Stomach (tissue), 19 donors: ENCODE measurements at regions of chr10 and their contacts with region 1.

Region 1: DNA sequence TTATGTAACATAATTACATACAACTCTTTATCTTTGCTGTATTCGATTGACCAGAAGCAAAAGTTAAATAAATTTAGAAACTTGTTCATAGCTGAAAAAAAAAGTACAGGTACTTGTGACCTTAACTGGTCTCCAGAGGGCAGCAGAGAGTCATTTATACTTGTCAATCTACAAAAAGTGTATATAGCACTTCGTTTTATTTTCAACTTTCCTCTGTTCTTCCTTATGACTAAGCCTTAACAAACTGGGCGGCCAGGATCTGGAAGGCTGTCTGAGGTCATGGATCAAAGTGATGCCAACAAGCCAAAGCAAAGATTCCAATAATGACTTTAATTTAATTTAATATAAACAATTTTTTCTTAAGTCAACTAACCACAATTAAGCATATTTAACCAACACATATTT is 29.8 kb downstream of the C10orf67 start:
- DNase-seq: peak; percentile 52 to 90
- H3K4me3 ChIP-seq: no peak overlapping the region
- H3K27ac ChIP-seq: no peak overlapping the region
- H3K4me1 ChIP-seq: peaks cover 0 to 4% (median 0%) of the 10 kb centered on the region in 4 donors
- H3K27me3 ChIP-seq: no peaks in the 10 kb centered on the region
- CTCF ChIP-seq: peak in 5 of 7 experiments; percentile 37 to 66 (median 58)
- EP300 ChIP-seq: no peak
- POLR2A ChIP-seq: no peak

Region 2: GRCh38 chr10:23496727-23497126 is 181.9 kb after region 1 on chr10:
- intact Hi-C with region 1: no loop called
- DNase-seq: no peak
- H3K4me3 ChIP-seq: no peak overlapping the region
- H3K27ac ChIP-seq: no peak overlapping the region
- H3K4me1 ChIP-seq: no peaks in the 10 kb centered on the region
- H3K27me3 ChIP-seq: peaks cover 0 to 14% (median 4%) of the 10 kb centered on the region in 3 donors
- CTCF ChIP-seq: no peak
- EP300 ChIP-seq: no peak
- POLR2A ChIP-seq: no peak

Region 3: DNA sequence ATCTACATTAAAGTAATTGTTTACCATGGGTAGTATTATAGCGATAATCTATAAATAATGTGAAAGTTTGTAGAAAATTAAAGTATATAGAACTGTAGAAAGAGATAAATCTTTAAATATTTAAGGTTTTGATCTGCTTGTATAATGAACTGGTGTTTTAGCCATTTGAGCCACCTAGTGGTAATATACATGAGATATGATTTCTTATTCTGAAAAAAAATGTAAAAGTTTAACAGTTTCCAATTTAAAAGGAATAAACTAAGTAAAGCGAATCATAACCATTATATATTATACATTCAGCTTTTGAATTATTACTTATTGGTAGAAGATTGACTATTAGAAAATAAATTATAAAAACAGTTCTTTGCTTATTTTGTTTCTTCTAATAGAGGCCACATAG is 215.2 kb after region 1 on chr10:
- intact Hi-C with region 1: loop called (anchors 5 kb)
- DNase-seq: peak in 1 of 2 donors; percentile 17
- H3K4me3 ChIP-seq: no peak overlapping the region
- H3K27ac ChIP-seq: no peak overlapping the region
- H3K4me1 ChIP-seq: no peaks in the 10 kb centered on the region
- H3K27me3 ChIP-seq: peaks cover 0 to 10% (median 0%) of the 10 kb centered on the region in 3 donors
- CTCF ChIP-seq: peak in 1 of 7 experiments; percentile 30
- EP300 ChIP-seq: no peak
- POLR2A ChIP-seq: no peak

Region 4: GRCh38 chr10:23702977-23703414 is 388.2 kb after region 1 on chr10:
- intact Hi-C with region 1: loop called (anchors 5 kb)
- DNase-seq: peak; percentile 55 to 87
- H3K4me3 ChIP-seq: no peak overlapping the region
- H3K27ac ChIP-seq: no peak overlapping the region
- H3K4me1 ChIP-seq: peaks cover 0 to 8% (median 2%) of the 10 kb centered on the region in 4 donors
- H3K27me3 ChIP-seq: peaks cover 0 to 8% (median 0%) of the 10 kb centered on the region in 3 donors
- CTCF ChIP-seq: peak in 5 of 7 experiments; percentile 50 to 67 (median 58)
- EP300 ChIP-seq: no peak
- POLR2A ChIP-seq: no peak

Region 5: DNA sequence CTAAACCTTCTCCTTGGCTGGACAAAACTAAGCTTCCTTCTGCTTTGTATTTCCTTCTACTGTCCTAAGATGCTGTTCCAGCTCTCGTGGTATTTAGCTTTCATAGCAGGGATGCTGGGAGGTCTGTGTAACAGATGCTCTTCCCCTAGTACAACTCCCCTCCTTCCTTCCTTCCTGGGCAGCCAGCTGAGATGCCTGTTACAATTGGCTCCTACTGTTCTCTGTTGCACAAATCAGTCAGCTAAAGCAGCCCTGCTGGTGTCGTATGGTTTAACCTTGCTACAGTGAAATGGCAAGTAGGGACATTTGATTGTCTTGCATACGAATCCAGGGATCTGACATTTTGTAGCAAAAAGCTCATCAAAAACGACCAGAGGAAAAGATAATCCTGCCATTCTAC is 1265.1 kb after region 1 on chr10:
- intact Hi-C with region 1: no loop called
- DNase-seq: no peak
- H3K4me3 ChIP-seq: no peak overlapping the region
- H3K27ac ChIP-seq: no peak overlapping the region
- H3K4me1 ChIP-seq: no peaks in the 10 kb centered on the region
- H3K27me3 ChIP-seq: no peaks in the 10 kb centered on the region
- CTCF ChIP-seq: no peak
- EP300 ChIP-seq: no peak
- POLR2A ChIP-seq: no peak